Transverse colon (tissue), 4 donors: ENCODE measurements at regions of chr4 and their contacts with region 1.

Region 1: GRCh38 chr4:84433633-84434222 is 65.4 kb downstream of the NKX6-1 start:
- DNase-seq: no peak
- H3K4me3 ChIP-seq: no peak overlapping the region
- H3K27ac ChIP-seq: no peak overlapping the region
- H3K4me1 ChIP-seq: no peaks in the 10 kb centered on the region
- H3K27me3 ChIP-seq: no peaks in the 10 kb centered on the region
- CTCF ChIP-seq: no peak
- EP300 ChIP-seq: no peak
- POLR2A ChIP-seq: no peak

Region 2: DNA sequence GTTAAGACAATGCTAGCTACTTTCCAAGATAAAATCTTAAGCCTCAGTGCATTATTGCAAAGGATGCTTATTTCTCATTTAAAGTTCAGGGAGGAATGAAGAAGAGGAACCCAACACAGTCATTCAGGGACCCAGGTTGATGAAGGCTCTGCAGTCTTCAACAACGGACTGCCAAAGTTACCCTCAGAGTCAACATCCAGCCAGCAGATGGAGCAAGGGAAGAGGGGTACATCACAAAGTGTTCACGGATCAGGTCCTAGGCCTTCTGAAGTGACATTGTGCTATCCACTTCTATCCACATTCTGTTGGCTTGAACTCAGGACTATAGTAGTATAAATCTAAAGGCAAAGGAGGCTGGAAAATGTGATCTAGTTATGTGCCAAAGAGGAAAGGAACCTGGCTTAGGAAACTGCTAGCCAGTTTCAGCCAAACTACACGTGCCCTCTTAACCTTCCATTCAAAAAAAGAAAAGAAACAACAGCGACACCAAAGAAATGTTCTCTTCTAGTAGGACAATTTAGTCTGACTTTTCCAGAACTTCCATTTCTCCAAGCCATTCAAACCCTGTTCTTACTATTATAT is 36.6 kb after region 1 on chr4:
- in situ Hi-C with region 1: no loop called
- intact Hi-C with region 1: loop called (anchors 1 kb)
- DNase-seq: no peak
- H3K4me3 ChIP-seq: no peak overlapping the region
- H3K27ac ChIP-seq: no peak overlapping the region
- H3K4me1 ChIP-seq: no peaks in the 10 kb centered on the region
- H3K27me3 ChIP-seq: peaks cover 13% of the 10 kb centered on the region
- CTCF ChIP-seq: no peak
- EP300 ChIP-seq: no peak
- POLR2A ChIP-seq: no peak